ENCODE measurements at regions of chr9 and their contacts with region 1.

Region 1: DNA sequence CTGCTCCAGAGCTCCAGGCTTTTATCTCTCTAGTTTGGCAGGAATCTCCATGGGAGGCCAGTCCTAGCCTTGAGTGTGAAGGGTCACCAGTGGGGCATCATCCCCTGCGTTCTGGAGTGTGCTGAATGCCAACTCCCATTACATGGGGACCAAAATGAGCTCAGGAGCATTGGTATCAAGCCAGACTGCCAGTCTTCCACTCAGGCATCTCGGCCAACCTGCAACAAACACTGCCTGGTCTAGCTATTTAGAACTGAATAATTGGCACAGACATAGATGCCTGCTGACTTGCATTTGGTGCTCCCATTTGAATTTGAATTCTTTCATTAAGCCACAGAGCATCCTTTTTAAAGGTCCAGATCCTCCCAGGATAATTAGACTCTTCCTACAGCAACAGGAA is 116.5 kb upstream of the ABCA1 start:
- DNase-seq: no peak
- H3K4me3 ChIP-seq: no peak overlapping the region
- H3K27ac ChIP-seq: no peak overlapping the region
- H3K4me1 ChIP-seq: no peaks in the 10 kb centered on the region
- H3K27me3 ChIP-seq: no peaks in the 10 kb centered on the region
- CTCF ChIP-seq: no peak

Region 2: DNA sequence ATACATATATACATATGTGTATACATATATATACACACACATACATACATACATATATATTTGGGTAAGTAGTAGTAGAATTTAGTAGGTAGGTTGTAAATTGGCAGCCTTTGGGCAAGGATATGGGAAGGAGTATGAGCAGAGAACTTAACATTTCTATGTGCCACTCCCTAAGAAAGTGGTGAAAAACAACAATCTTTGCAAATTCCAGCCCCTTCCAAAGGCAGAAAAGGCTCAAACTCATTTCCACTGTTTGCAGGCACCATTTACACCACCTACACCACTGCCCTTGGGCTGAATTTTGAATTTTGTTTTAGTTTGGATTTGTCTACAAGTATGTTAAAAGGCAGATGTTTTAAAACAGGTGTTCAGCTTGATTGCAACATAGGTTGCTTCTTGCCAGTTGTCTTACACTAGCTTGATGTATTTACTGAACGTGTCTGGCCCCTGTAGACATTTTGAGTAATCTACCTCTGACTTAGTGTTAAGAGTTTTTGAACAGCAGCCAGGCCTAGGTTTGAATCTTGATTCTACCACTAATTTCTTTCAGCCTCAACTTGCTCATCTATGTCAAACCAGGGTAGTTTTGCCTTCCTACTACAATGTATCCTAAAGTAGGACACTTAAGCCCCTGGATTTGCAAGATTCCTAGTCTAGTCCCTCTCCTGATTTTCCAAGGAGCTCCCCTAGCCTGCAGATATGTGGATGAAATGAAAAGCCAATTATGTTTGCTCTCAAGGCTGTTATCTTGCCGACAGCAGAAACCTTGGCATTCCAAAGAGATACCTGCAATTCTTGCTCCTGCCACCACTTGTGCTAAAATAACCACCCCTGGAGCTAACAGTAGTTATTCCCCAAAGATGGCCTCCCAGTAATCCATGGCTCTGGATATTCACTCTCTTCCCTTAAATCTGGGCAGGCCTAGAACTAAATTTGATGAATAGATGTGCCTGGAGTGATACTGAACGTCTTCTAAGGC is 43.7 kb after region 1 on chr9:
- CTCF ChIA-PET with region 1: no interaction called
- dilution Hi-C with region 1: no loop called
- in situ Hi-C with region 1: no loop called
- intact Hi-C with region 1: loop called (anchors 5 kb)
- DNase-seq: no peak
- H3K4me3 ChIP-seq: no peak overlapping the region
- H3K27ac ChIP-seq: no peak overlapping the region
- H3K4me1 ChIP-seq: no peaks in the 10 kb centered on the region
- H3K27me3 ChIP-seq: no peaks in the 10 kb centered on the region
- CTCF ChIP-seq: peak in 1 of 2 donors; percentile 7

Region 3: GRCh38 chr9:105457560-105458294 is 413.2 kb after region 1 on chr9:
- CTCF ChIA-PET with region 1: no interaction called
- dilution Hi-C with region 1: no loop called
- in situ Hi-C with region 1: no loop called
- intact Hi-C with region 1: no loop called
- DNase-seq: peak; percentile 36
- H3K4me3 ChIP-seq: no peak overlapping the region
- H3K27ac ChIP-seq: no peak overlapping the region
- H3K4me1 ChIP-seq: peaks cover 12% of the 10 kb centered on the region
- H3K27me3 ChIP-seq: no peaks in the 10 kb centered on the region
- CTCF ChIP-seq: no peak

Region 4: GRCh38 chr9:105737205-105737604 is 692.7 kb after region 1 on chr9:
- CTCF ChIA-PET with region 1: no interaction called
- dilution Hi-C with region 1: no loop called
- in situ Hi-C with region 1: no loop called
- intact Hi-C with region 1: no loop called
- DNase-seq: no peak
- H3K4me3 ChIP-seq: no peak overlapping the region
- H3K27ac ChIP-seq: no peak overlapping the region
- H3K4me1 ChIP-seq: no peaks in the 10 kb centered on the region
- H3K27me3 ChIP-seq: no peaks in the 10 kb centered on the region
- CTCF ChIP-seq: no peak